ENCODE measurements at regions of chr17 and their contacts with region 1.

Region 1: DNA sequence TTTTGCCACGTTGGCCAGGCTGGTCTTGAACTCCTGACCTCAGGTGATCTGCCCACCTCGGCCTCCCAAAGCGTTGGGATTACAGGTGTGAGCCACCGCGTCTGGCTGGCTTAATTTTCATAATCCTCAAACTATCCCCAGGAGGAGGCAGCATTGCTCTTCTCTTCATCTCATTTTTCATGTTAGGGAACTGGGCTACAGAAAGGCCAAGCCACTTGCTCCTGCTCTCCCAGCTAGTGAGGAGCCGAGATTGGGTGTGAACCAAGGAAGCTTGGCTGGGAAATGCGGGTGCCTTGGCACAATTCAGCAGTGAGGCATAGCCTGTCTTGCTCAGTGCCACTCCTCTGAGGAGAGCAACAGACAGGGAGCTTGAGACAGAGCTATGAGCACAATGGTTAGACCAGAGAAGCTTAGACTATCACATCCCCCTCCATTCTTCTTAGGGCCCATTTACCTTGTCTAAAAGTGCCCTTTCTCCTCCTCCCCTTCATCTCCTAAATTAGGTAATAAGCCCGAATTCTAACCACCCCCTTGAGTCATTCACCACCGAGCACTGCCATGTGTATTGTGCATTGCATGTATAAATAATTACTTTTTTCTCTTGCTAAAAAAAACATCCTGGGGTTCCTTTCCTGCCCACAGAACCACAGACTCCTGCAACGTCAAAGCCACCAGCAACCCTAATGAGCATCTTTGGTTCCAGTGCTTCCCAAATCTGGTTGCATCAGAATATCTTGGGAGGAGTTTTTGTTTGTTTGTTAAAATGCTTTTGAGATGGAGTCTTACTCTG is 20.0 kb upstream of the KIF19 start:
- DNase-seq: no peak
- H3K4me3 ChIP-seq: no peak overlapping the region
- H3K27ac ChIP-seq: no peak overlapping the region
- H3K4me1 ChIP-seq: no peaks in the 10 kb centered on the region
- H3K27me3 ChIP-seq: no peaks in the 10 kb centered on the region
- CTCF ChIP-seq: no peak

Region 2: DNA sequence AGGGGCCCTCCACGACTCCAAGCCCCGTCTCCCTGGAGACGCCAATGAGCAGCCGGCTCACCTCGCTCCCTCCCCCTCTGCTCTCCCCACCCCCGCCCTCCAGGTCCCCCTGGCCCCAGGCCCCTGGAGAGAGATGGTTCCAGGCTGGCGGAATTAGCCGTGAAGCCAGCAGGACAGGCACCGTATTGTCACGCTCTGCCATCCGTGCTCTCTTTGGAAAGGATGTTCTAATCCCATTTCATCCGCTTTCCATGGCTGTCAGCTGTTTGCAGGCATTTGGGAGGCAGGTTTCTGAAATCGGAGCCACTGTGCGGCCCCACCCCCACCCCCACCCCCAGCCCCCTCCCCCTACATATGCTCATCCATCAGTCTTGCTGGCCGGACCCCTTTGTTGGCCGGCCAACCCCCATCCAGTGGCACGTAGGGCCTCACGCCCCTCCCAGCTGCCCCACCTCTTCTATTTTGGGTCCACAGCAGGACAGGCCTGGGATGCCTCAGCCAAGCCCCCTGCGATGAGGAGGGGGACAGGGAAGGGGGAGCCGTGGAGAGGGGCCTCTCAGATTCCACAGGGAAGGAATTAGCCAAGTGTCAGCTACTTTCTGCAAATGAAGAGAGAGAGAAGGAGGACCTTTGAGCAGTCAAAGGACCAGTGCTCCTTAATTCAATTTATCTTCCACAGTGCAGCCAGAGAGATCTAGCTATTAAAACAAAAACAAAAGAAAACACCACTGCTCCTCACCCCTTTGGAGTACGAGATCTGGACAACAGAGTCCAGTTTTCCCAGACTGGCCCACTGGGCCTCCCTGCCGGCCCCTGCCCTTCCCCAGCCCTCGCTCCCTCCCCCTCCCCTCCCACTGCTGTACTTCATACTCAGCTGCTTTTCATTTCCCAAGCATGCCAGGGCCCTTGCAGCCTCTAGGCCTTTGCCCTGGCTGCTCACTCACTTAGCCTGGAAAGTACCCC is 692.5 kb before region 1 on chr17:
- intact Hi-C with region 1: no loop called
- DNase-seq: peak in 4 of 5 donors; percentile 89 to 95 (median 90)
- H3K4me3 ChIP-seq: no peak overlapping the region
- H3K27ac ChIP-seq: no peak overlapping the region
- H3K4me1 ChIP-seq: peaks cover 0 to 3% (median 0%) of the 10 kb centered on the region in 3 donors
- H3K27me3 ChIP-seq: no peaks in the 10 kb centered on the region
- CTCF ChIP-seq: no peak

Region 3: DNA sequence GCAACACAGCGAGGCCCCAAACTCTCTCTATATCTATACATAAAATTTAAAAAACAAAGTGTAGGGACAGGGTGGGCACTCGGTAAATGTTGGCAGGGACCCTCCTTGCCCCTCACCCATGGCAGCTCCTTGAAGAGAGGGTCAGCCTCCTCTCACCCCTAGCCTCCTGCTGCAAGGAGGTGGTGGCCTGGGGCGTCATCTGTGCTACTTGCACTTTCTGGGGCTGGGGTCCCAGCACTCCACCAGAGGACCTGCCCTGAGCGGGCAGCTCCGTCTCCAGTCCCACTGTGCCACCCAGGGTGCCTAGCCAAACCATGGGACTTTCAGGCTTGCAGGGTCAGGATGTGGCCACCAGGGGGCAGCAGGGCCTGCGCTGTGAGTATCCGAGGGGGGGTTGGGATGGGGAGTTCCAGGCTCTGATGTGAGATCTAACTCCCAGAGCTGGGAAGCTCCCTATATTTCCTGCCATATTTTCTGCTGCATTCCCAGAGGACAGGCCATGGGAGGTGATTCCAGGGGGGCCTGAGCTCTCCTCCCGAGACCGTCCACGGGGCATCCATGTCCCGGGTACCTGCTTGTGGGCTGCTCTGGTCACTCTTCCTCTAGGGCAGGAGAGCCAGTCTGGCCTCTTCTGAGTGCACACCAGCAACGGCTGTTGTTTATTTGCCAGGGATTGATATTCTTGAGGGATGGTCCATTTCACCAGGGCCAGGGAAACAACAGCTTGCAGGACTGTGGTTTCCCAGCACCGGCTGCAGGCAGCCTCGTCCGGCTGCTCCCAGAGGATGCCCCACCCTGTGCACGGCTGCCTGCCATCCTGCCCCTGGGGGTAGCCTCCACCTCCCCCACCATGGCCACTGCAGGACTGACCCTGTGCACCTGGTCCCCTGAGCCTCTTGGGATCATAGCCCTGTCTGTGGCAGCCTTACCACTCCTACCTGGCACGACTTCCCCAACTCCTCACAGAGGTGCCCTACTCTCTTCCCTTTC is 62.3 kb after region 1 on chr17:
- intact Hi-C with region 1: loop called (anchors 10 kb)
- DNase-seq: peak in 4 of 5 donors; percentile 60 to 81 (median 71)
- H3K4me3 ChIP-seq: no peak overlapping the region
- H3K27ac ChIP-seq: no peak overlapping the region
- H3K4me1 ChIP-seq: no peaks in the 10 kb centered on the region
- H3K27me3 ChIP-seq: no peaks in the 10 kb centered on the region
- CTCF ChIP-seq: peak; percentile 88

Measured in kidney (tissue), 22 donors.